Naive thymus-derived CD4-positive, alpha-beta T cell (primary cell): ENCODE measurements at regions of chr11 and their contacts with region 1.

Region 1: GRCh38 chr11:33893711-33894397 is 2.0 kb upstream of the LMO2 start:
- DNase-seq: peak; percentile 20 to 77 (median 73)
- ATAC-seq: peak; percentile 88
- H3K4me3 ChIP-seq: peak overlapping the region; percentile 54
- H3K4me3 Mint-ChIP-seq: peak overlapping the region; percentile 35 to 93 (median 86)
- H3K27ac ChIP-seq: no peak overlapping the region
- H3K27ac Mint-ChIP-seq: peak overlapping the region in 8 of 9 donors; percentile 12 to 90 (median 76)
- H3K4me1 ChIP-seq: peaks cover 18 to 20% of the 10 kb centered on the region in 2 donors
- H3K4me1 Mint-ChIP-seq: peaks cover 24 to 48% (median 34%) of the 10 kb centered on the region in 7 donors
- H3K27me3 ChIP-seq: no peaks in the 10 kb centered on the region
- H3K27me3 Mint-ChIP-seq: peaks cover 23 to 77% (median 49%) of the 10 kb centered on the region in 5 donors

Region 2: DNA sequence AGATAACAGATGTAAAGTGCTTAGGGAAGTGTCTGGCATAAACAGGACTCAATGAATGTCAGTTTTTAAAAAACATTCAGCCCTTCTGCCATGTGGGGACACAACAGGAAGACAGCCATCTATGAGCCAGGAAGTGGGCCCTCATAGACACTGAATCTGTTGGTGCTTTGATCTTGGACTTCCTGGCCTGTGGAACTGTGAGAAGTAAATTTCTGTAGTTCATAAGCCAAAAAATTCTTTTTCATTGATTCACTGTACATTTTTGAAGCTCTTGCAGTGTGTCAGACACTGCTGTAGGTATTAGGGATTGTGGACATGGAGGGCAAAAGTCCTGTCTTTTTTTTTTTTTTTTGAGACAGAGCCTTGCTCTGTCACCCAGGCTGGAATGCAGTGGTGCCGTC is 448.1 kb before region 1 on chr11:
- CTCF ChIA-PET with region 1: no interaction called
- POLR2A ChIA-PET with region 1: no interaction called
- intact Hi-C with region 1: no loop called
- DNase-seq: no peak
- ATAC-seq: no peak
- H3K4me3 ChIP-seq: no peak overlapping the region
- H3K4me3 Mint-ChIP-seq: no peak overlapping the region
- H3K27ac ChIP-seq: no peak overlapping the region
- H3K27ac Mint-ChIP-seq: no peak overlapping the region
- H3K4me1 ChIP-seq: no peaks in the 10 kb centered on the region
- H3K4me1 Mint-ChIP-seq: peaks cover 0 to 5% (median 1%) of the 10 kb centered on the region in 7 donors
- H3K27me3 ChIP-seq: peaks cover 0 to 4% of the 10 kb centered on the region in 2 donors
- H3K27me3 Mint-ChIP-seq: peaks cover 0 to 11% (median 6%) of the 10 kb centered on the region in 5 donors

Region 3: DNA sequence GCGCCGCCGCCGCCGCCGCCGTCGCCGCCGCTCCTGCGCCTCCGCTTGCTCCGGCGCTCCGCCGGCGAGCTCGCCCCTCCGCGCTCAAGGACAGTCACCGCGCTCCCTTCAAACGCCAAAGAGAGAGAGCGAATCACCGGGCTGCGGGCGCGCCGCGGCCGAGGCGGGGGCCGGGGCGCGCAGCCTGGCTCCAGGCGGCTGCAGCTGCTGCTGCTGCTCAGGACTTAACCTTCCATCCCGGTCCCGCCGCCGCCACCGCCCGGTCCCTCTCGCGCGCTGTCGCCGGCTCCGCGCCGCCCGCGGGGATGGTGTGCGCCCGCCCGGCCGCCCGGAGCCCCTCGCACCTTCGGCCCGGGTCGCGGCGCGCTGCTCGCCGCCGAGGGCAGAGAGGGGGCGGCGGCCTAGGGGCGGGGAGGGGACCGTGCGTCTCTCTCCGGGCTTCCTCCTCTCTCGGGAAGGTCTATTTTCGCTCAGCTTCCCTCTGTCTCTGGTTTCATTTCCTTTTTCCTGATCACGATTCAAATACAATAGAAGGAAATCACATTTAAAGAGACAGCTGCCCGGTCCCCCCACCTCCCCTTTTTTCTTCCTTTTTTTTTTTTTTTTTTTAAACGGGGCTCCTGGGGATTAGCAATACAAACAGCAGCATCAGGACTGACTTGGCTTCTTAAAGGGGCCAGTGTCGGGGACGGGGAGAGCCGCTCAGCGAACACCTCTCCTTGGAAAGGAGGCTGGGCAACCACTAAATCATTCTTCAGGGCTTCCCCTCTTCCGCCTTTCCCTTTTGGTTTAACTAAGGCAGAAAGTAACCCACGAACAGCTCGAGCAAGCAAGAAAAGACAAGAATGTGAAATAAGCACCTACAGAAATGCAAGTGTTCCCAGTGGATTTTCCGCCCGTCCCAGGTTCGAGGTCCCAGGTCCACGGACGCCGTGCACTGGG is 24.1 kb before region 1 on chr11:
- CTCF ChIA-PET with region 1: no interaction called
- POLR2A ChIA-PET with region 1: interaction called, 3 read pairs
- intact Hi-C with region 1: loop called in 1 of 2 experiments (anchors 2 kb)
- DNase-seq: peak in 2 of 9 donors; percentile 20 to 34
- ATAC-seq: peak; percentile 77
- H3K4me3 ChIP-seq: peak overlapping the region; percentile 47
- H3K4me3 Mint-ChIP-seq: peak overlapping the region; percentile 85 to 97 (median 92)
- H3K27ac ChIP-seq: no peak overlapping the region
- H3K27ac Mint-ChIP-seq: peak overlapping the region in 1 of 9 donors; percentile 67
- H3K4me1 ChIP-seq: peaks cover 0 to 7% of the 10 kb centered on the region in 2 donors
- H3K4me1 Mint-ChIP-seq: peaks cover 0 to 25% (median 12%) of the 10 kb centered on the region in 7 donors
- H3K27me3 ChIP-seq: peaks cover 0 to 18% of the 10 kb centered on the region in 2 donors
- H3K27me3 Mint-ChIP-seq: peaks cover 47 to 77% (median 71%) of the 10 kb centered on the region in 5 donors

Region 4: GRCh38 chr11:33965032-33965431 is 71.2 kb after region 1 on chr11:
- CTCF ChIA-PET with region 1: no interaction called
- POLR2A ChIA-PET with region 1: no interaction called
- intact Hi-C with region 1: loop called in 1 of 2 experiments (anchors 5 kb)
- DNase-seq: no peak
- ATAC-seq: no peak
- H3K4me3 ChIP-seq: no peak overlapping the region
- H3K4me3 Mint-ChIP-seq: no peak overlapping the region
- H3K27ac ChIP-seq: no peak overlapping the region
- H3K27ac Mint-ChIP-seq: no peak overlapping the region
- H3K4me1 ChIP-seq: no peaks in the 10 kb centered on the region
- H3K4me1 Mint-ChIP-seq: peaks cover 0 to 1% (median 0%) of the 10 kb centered on the region in 7 donors
- H3K27me3 ChIP-seq: no peaks in the 10 kb centered on the region
- H3K27me3 Mint-ChIP-seq: peaks cover 13 to 20% (median 14%) of the 10 kb centered on the region in 5 donors